Upper lobe of right lung (tissue), 1 donor: ENCODE measurements at regions of chr17 and their contacts with region 1.

Region 1: GRCh38 chr17:47840740-47841603 is at the start of gene SCRN2:
- DNase-seq: peak; percentile 95
- ATAC-seq: peak; percentile 97
- H3K4me3 ChIP-seq: peak within 1 kb of the TSS; percentile 94
- H3K27ac ChIP-seq: peak within 1 kb of the TSS; percentile 80
- H3K4me1 ChIP-seq: peaks cover 24% of the 10 kb centered on the region
- H3K27me3 ChIP-seq: peaks cover 11% of the 10 kb centered on the region
- CTCF ChIP-seq: peak; percentile 98
- total RNA-seq, gene SCRN2: 30.5 TPM

Region 2: DNA sequence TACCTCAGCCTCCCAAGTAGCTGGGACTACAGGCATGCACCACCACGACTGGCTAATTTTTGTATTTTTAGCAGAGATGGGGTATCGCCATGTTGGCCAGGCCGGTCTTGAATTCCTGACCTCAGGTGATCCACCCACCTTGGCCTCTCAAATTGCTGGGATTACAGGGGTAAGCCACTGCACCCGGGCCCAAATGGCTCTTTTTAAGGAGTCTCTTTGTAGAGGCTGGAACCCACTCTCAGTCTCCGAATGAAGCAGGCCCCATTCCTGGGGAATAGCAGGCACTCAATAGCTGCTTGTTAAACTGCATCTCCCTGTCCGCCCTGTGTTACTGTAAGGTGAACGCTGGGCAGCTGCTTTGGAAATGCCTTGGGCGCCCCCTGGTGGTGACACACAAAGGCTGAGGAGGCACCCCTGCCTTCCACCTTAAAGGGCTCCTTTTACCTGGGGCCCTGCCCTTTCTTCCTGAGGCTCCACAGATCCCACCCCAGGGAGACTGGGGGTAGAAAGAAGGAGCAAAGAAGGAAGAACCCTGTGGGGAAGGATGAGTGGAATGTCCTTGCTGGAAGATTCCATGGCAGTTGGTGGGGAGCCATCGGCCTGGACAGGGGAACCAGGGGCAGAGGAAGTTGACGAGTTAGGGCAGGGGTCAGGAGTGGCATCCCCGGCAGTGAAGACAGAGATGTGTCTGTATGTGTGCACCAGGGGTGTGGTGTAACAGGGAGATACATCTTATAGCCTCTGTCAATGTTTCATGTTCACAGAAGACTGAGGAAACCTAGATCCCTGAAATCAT is 49.0 kb after region 1 on chr17:
- intact Hi-C with region 1: loop called (anchors 5 kb)
- DNase-seq: peak; percentile 94
- ATAC-seq: peak; percentile 97
- H3K4me3 ChIP-seq: no peak overlapping the region
- H3K27ac ChIP-seq: no peak overlapping the region
- H3K4me1 ChIP-seq: peaks cover 7% of the 10 kb centered on the region
- H3K27me3 ChIP-seq: no peaks in the 10 kb centered on the region
- CTCF ChIP-seq: peak; percentile 97